Posterior vena cava (tissue), 2 donors: ENCODE measurements at regions of chr14 and their contacts with region 1.

Region 1: GRCh38 chr14:45070215-45070614 is 13.7 kb upstream of the PRPF39 start:
- DNase-seq: no peak

Region 2: GRCh38 chr14:45103806-45104205 is 33.6 kb after region 1 on chr14:
- intact Hi-C with region 1: loop called in 1 of 2 experiments (anchors 2 kb)
- DNase-seq: no peak

Region 3: DNA sequence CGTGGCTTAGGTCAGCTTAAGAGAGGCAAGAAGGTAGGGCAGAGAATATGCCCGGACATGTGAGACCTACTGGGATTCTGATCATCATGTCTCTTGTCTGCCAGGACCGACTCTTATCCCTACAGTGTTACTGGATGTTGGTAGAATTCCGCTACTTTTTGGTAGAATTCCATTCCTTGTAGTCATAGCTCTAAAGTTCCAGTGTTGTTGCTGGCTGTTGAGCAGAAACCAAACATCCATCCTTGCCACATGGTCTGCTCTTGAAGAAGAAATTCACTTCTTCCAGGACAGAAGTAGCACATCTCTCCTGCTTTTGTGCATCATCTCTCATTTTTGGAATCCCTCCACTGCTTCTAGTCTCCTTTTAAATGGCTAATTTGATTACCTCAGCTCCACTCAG is 1127.6 kb after region 1 on chr14:
- intact Hi-C with region 1: no loop called
- DNase-seq: no peak